ENCODE measurements at regions of chr11 and their contacts with region 1.

Region 1: GRCh38 chr11:116499396-116500003 is 273.3 kb downstream of the BUD13 start:
- DNase-seq: no peak
- H3K4me3 ChIP-seq: no peak overlapping the region
- H3K27me3 ChIP-seq: peaks cover 10% of the 10 kb centered on the region
- CTCF ChIP-seq: peak; percentile 53

Region 2: GRCh38 chr11:116454020-116454645 is 45.4 kb before region 1 on chr11:
- CTCF ChIA-PET with region 1: interaction called, 103 read pairs
- POLR2A ChIA-PET with region 1: no interaction called
- DNase-seq: no peak
- H3K4me3 ChIP-seq: no peak overlapping the region
- H3K27me3 ChIP-seq: no peaks in the 10 kb centered on the region
- CTCF ChIP-seq: peak; percentile 51

Region 3: GRCh38 chr11:116461789-116462188 is 37.7 kb before region 1 on chr11:
- CTCF ChIA-PET with region 1: interaction called, 103 read pairs
- POLR2A ChIA-PET with region 1: no interaction called
- DNase-seq: no peak
- H3K4me3 ChIP-seq: no peak overlapping the region
- H3K27me3 ChIP-seq: no peaks in the 10 kb centered on the region
- CTCF ChIP-seq: no peak

Region 4: GRCh38 chr11:116471608-116472256 is 27.8 kb before region 1 on chr11:
- CTCF ChIA-PET with region 1: interaction called, 12 read pairs
- POLR2A ChIA-PET with region 1: no interaction called
- DNase-seq: peak; percentile 68
- H3K4me3 ChIP-seq: no peak overlapping the region
- H3K27me3 ChIP-seq: no peaks in the 10 kb centered on the region
- CTCF ChIP-seq: no peak

Region 5: GRCh38 chr11:116510886-116511650 is 11.6 kb after region 1 on chr11:
- CTCF ChIA-PET with region 1: interaction called, 13 read pairs
- POLR2A ChIA-PET with region 1: no interaction called
- DNase-seq: no peak
- H3K4me3 ChIP-seq: no peak overlapping the region
- H3K27me3 ChIP-seq: no peaks in the 10 kb centered on the region
- CTCF ChIP-seq: no peak